Activated CD4-positive, alpha-beta T cell treated with anti-CD3 and anti-CD28 coated beads for 36 hours (primary cell): ENCODE measurements at regions of chr10 and their contacts with region 1.

Region 1: DNA sequence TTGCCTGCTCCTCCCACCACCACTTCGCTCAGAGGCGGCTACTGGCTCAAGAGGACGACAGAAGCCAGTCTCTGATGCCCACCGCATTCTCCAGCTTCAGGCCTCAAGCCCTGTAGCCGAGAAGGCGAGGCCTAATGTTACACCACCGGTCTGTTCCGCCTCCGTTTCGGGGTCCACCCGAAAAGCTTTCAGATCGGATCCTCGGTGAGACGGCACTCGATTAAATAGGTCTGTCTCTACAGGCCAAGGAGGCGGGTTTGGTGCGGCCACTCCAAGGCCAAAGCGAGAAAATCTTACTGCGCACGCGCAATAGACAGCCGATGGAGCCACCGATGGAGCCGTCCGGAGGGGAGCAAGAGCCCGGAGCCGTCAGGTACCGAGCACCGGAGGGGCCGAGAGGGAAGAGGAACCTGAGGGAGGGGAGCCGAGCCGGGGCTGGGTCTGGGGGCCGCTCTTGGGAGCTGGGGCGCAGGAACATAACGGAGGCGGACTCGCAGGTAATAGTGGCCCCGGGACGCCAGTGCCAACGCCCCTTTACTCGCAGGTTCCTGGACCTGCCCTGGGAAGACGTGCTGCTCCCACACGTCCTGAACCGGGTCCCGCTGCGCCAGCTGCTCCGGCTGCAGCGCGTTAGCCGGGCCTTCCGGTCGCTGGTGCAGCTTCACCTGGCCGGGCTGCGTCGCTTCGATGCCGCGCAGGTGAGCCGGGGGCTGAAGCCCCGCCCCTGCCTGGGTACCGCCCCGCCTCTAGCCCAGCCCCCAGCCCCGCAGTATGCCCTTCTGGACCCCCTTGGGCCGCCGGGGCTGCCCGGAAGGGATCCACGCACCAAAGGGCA is at the start of gene FBXL15:
- DNase-seq: peak; percentile 98
- ATAC-seq: peak; percentile 80
- H3K4me3 Mint-ChIP-seq: peak within 1 kb of the TSS; percentile 96
- H3K27ac Mint-ChIP-seq: peak within 1 kb of the TSS; percentile 87
- H3K4me1 Mint-ChIP-seq: peaks cover 30% of the 10 kb centered on the region
- H3K27me3 Mint-ChIP-seq: peaks cover 14% of the 10 kb centered on the region
- total RNA-seq, gene FBXL15: 5.4 to 11.9 TPM

Region 2: DNA sequence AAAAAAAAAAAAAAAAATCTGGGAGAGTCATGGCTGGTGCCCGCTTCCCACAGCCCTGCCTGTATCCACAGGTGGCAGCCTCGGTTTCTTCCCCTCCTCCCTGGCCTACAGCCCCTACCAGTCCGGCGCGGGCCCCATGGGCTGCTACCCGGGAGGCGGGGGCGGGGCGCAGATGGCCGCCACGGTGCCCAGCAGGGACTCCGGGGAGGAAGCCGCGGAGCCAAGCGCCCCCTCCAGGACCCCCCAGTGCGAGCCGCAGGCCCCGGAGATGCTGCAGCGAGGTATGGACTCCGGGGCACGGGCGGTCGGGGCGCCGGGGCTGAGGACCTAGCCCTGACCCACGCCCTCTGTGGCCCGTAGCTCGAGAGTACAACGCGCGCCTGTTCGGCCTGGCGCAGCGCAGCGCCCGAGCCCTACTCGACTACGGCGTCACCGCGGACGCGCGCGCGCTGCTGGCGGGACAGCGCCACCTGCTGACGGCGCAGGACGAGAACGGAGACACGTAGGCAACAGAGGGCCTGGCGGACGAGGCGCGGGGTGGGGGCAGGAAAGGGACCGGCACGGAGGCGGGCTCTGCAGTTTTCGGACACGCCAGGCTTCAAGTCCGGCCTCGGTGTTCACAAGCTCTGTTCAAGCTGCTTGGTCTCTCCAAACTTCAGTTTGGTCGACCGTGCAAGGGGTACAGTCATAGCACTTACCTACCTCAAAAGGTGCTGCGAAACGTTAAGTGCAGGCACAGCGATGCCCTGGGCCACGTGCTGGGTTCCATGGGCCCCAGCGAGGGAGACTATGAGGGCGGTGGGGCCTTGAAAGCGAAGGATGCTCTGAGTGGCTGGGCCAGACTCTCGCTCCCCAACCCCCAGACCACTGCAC is 21.6 kb before region 1 on chr10:
- CTCF ChIA-PET with region 1: interaction called, 67 read pairs
- POLR2A ChIA-PET with region 1: interaction called, 9 read pairs
- intact Hi-C with region 1: loop called (anchors 1 kb)
- DNase-seq: peak; percentile 94
- ATAC-seq: peak; percentile 60
- H3K4me3 Mint-ChIP-seq: peak overlapping the region; percentile 95
- H3K27ac Mint-ChIP-seq: peak overlapping the region; percentile 98
- H3K4me1 Mint-ChIP-seq: peaks cover 41% of the 10 kb centered on the region
- H3K27me3 Mint-ChIP-seq: no peaks in the 10 kb centered on the region

Region 3: DNA sequence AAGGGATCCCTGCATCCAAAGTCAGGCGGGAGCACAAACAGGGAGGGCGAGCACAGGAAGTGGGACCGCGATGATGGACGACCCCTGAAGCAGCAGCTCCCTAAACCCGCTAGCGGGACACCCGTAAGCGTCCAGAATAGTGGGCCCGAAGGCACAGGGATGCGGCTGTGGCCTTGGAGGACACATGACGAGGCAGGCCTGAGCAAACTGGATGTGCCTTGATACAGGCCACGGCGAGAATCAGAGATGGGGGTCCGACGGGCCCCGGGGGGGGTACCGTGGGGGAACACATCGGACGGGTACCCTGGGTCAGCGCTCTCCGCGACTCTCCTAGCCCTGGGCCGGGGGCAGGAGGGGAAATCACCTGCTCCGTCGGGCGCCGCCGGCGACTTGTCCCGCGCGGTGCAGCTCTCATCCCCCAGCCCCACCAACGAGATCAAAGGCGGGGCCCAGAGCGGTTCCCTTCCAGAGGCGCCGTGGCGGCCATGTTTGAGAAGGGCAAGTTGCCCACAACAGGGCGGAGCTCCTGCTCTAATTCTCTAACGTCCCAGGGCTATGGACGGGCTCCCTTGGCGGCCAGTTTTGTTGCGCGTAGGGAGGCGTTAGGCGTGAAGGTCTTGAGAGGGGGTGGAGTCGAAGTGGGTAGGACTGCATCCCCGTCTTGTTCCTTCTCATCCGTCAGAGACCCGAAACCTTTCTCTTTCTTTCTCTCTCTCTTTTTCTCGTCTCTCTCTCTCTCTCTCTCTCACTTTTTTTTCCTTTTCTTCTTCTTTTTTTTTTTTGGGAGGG is 11.3 kb after region 1 on chr10 and contains the start of gene CUEDC2:
- CTCF ChIA-PET with region 1: interaction called, 35 read pairs
- POLR2A ChIA-PET with region 1: interaction called, 27 read pairs
- intact Hi-C with region 1: loop called (anchors 1 kb)
- DNase-seq: peak; percentile 99
- ATAC-seq: peak; percentile 94
- H3K4me3 Mint-ChIP-seq: peak within 1 kb of the TSS; percentile 85
- H3K27ac Mint-ChIP-seq: peak within 1 kb of the TSS; percentile 94
- H3K4me1 Mint-ChIP-seq: peaks cover 42% of the 10 kb centered on the region
- H3K27me3 Mint-ChIP-seq: no peaks in the 10 kb centered on the region
- total RNA-seq, gene CUEDC2: 60.8 to 72.7 TPM

Region 4: DNA sequence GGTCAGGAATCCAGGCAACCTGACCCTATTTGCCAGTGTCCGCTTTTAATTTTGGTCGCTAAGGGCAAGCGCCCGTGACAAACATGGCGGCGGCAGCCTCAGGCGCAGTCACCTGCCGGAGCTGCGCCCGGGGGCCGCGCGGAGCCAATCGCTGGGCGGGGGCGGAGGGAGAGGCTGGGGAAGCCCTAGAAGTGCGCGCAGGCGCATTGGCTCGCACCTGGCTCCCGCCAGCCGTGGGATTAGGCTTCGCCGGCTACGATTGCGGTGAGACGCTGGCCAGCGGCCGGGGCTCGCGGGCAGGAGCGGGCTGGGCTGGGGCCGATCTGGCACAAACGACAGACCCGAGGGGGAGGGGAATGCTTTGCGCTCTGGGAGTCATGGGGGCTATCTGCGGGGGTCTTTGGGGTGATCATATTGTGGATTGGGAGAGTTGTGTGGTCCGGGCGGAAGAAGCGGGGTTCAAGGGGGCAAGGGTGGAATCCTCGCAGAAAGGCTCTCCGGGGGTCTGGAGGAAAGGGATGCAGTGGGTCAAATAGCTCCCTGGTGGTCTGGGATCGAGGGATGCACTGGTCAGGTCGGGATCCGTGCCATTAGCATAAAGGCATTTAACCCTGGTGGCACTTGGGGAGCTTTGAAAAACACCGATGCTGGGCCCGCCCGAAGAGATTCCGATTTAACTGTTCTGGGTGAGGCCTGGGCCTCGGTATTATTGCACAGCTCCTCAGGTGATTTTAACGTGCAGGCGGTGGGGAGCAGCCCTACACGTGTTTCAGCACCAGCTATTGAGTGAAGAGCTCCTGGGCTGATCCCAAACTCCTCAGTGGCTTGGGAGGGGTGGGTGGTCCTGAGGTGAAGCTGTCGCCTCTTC is 40.4 kb after region 1 on chr10:
- CTCF ChIA-PET with region 1: interaction called, 6 read pairs
- POLR2A ChIA-PET with region 1: no interaction called
- intact Hi-C with region 1: loop called in 1 of 2 experiments (anchors 1 kb)
- DNase-seq: peak; percentile 97
- ATAC-seq: peak; percentile 98
- H3K4me3 Mint-ChIP-seq: peak overlapping the region; percentile 85
- H3K27ac Mint-ChIP-seq: peak overlapping the region; percentile 73
- H3K4me1 Mint-ChIP-seq: peaks cover 27% of the 10 kb centered on the region
- H3K27me3 Mint-ChIP-seq: no peaks in the 10 kb centered on the region